OCI-LY7 (cell line): ENCODE measurements at regions of chr14 and their contacts with region 1.

Region 1: DNA sequence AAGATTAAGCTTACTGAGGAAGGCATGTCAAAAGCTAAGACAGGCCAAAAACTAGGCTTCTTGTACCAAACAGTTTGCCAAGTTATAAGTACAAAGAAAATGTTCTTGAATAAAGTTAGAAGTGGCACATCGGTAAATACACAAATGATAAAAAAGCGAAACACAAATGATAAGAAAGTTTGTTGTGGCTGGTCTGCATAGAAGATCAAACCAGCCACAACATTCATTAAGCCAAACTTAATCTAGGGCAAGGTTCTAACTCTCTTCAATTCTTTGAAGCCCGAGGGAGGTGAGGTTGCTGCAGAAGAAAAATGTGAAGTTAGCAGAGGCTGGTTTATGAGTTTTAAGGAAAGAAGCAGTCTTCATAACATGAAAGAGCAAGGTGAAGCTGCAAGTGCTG is 1119.6 kb upstream of the FLRT2 start:
- DNase-seq: no peak
- H3K4me3 ChIP-seq: no peak overlapping the region
- H3K27ac ChIP-seq: no peak overlapping the region
- H3K4me1 ChIP-seq: no peaks in the 10 kb centered on the region
- CTCF ChIP-seq: no peak

Region 2: GRCh38 chr14:85714069-85714468 is 1303.7 kb after region 1 on chr14:
- CTCF ChIA-PET with region 1: no interaction called
- POLR2A ChIA-PET with region 1: no interaction called
- intact Hi-C with region 1: loop called (anchors 10 kb)
- DNase-seq: no peak
- H3K4me3 ChIP-seq: no peak overlapping the region
- H3K27ac ChIP-seq: no peak overlapping the region
- H3K4me1 ChIP-seq: no peaks in the 10 kb centered on the region
- CTCF ChIP-seq: no peak